SK-N-SH (cell line): ENCODE measurements at regions of chr1 and their contacts with region 1.

Region 1: GRCh38 chr1:237677979-237678378 is 212.7 kb downstream of the ZP4 start:
- DNase-seq: peak; percentile 21
- H3K4me3 ChIP-seq: peak overlapping the region in 1 of 2 experiments; percentile 12; a peak in 1 of 4 replicates
- H3K27ac ChIP-seq: no peak overlapping the region
- H3K4me1 ChIP-seq: no peaks in the 10 kb centered on the region; a peak in 1 of 4 replicates
- H3K27me3 ChIP-seq: no peaks in the 10 kb centered on the region
- CTCF ChIP-seq: peak; percentile 35
- EP300 ChIP-seq: no peak
- RAD21 ChIP-seq: peak; percentile 87

Region 2: DNA sequence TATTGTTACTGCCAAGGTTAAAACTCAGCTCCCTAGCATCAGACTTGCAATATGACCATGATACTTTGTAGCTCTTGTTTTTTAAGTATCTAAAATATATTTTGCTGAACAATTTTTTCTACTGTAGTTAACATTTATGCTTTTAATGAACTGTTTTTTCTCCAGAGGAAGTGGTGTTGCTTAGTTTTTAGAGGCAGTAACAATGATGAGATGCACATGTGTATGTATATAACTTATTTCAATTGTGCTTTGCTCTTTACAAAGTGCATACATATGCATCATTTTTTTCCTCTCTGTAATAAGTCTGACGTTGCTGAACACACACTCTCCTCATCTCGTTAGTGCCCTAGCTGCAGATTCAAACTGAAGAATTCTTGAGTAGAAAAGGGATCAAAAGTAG is 206.0 kb before region 1 on chr1:
- CTCF ChIA-PET with region 1: no interaction called
- POLR2A ChIA-PET with region 1: no interaction called
- DNase-seq: no peak
- H3K4me3 ChIP-seq: no peak overlapping the region
- H3K27ac ChIP-seq: no peak overlapping the region
- H3K4me1 ChIP-seq: no peaks in the 10 kb centered on the region
- H3K27me3 ChIP-seq: no peaks in the 10 kb centered on the region
- CTCF ChIP-seq: no peak
- EP300 ChIP-seq: no peak
- RAD21 ChIP-seq: no peak

Region 3: GRCh38 chr1:237736372-237737029 is 58.5 kb after region 1 on chr1:
- CTCF ChIA-PET with region 1: interaction called, 13 read pairs
- POLR2A ChIA-PET with region 1: no interaction called
- DNase-seq: peak; percentile 14
- H3K4me3 ChIP-seq: no peak overlapping the region
- H3K27ac ChIP-seq: no peak overlapping the region
- H3K4me1 ChIP-seq: peaks cover 0 to 8% of the 10 kb centered on the region in 2 experiments; a peak in 2 of 4 replicates
- H3K27me3 ChIP-seq: no peaks in the 10 kb centered on the region
- CTCF ChIP-seq: peak; percentile 37
- EP300 ChIP-seq: no peak
- RAD21 ChIP-seq: peak; percentile 63

Region 4: DNA sequence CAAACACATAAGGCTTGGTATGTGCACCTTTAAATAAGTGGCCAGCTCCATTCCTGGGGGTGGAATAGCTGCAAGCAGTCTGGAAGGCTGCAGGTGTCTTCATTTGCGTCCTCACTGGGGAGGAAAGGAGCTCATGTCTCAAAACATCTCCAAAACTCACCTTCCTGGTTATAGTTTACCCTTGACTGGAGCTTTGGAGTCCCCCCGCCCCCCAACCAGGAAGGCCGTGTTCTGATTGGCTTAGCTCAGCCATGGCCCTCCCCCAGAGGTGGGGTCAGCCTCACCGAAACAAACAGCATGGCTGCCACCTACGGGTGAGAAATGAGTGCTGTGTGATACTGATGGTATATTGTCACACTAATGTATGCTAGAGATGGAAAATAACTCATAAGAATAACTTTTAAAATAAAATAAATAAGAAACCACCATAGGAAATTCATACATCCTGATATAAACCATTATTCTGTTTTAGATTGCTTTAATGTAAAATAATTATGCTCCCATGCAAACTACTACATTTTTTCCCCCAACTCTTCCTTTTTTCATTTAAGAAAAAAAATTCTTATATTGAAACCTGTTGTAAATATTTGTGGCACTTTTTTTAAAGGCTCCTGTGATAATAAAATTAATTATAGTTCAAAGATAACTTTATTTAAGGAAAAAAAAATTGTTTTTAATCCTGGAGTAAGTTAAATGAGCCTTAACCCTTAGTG is 121.9 kb after region 1 on chr1:
- CTCF ChIA-PET with region 1: interaction called, 38 read pairs
- POLR2A ChIA-PET with region 1: no interaction called
- DNase-seq: peak; percentile 91
- H3K4me3 ChIP-seq: peak overlapping the region in 1 of 2 experiments; percentile 11; a peak in 1 of 4 replicates
- H3K27ac ChIP-seq: no peak overlapping the region
- H3K4me1 ChIP-seq: peaks cover 0 to 2% of the 10 kb centered on the region in 2 experiments; a peak in 2 of 4 replicates
- H3K27me3 ChIP-seq: no peaks in the 10 kb centered on the region
- CTCF ChIP-seq: peak; percentile 68
- EP300 ChIP-seq: no peak
- RAD21 ChIP-seq: peak; percentile 92

Region 5: DNA sequence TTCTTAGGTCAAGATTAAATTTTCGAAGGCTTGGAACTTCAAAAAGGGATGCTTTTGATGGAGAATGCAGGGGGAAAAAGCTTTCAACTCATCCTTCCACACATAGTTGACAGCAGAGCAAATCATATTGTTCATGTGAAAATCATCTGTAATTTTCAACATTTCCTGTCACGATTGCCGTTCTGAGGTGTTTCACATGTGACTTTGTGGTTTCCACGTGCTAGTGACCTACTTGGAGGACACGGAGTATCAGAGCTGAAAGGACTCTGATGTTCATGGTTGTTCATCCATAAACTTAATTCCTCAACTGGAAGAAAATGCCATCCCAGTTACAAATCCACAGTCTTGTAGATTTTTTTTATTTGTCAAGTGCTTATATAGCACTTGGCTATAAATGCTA is 133.7 kb after region 1 on chr1:
- CTCF ChIA-PET with region 1: interaction called, 15 read pairs
- POLR2A ChIA-PET with region 1: no interaction called
- DNase-seq: no peak
- H3K4me3 ChIP-seq: no peak overlapping the region
- H3K27ac ChIP-seq: no peak overlapping the region
- H3K4me1 ChIP-seq: no peaks in the 10 kb centered on the region; a peak in 1 of 4 replicates
- H3K27me3 ChIP-seq: no peaks in the 10 kb centered on the region
- CTCF ChIP-seq: no peak
- EP300 ChIP-seq: no peak
- RAD21 ChIP-seq: no peak

Region 6: DNA sequence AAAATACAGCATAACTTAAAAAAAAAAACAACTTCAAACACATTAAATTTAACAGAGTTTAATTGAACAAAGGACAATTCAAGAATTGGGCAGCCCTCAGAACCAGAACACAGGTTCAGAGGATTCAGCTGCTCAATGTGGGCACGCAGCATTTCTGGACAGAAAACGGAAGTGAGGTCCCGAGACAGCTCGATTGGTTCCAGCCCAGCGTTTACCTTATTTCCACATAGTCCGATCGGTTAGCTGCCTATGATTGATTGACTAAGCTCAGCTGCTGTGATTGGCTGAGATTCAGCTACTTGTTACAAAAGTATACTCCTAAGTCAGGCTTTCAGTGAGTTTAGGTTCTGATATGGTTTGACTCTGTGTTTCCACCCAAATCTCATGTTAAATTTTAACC is 179.5 kb after region 1 on chr1:
- CTCF ChIA-PET with region 1: no interaction called
- POLR2A ChIA-PET with region 1: no interaction called
- DNase-seq: no peak
- H3K4me3 ChIP-seq: no peak overlapping the region
- H3K27ac ChIP-seq: no peak overlapping the region
- H3K4me1 ChIP-seq: peaks cover 0 to 2% of the 10 kb centered on the region in 2 experiments; a peak in 1 of 4 replicates
- H3K27me3 ChIP-seq: no peaks in the 10 kb centered on the region
- CTCF ChIP-seq: no peak
- EP300 ChIP-seq: no peak
- RAD21 ChIP-seq: no peak